OCI-LY7 (cell line): ENCODE measurements at regions of chr5 and their contacts with region 1.

Region 1: GRCh38 chr5:45189481-45189880 is 380.7 kb downstream of the MRPS30 start:
- DNase-seq: no peak
- H3K4me3 ChIP-seq: no peak overlapping the region
- H3K27ac ChIP-seq: no peak overlapping the region
- H3K4me1 ChIP-seq: no peaks in the 10 kb centered on the region
- CTCF ChIP-seq: no peak

Region 2: GRCh38 chr5:43680286-43680685 is 1509.2 kb before region 1 on chr5:
- CTCF ChIA-PET with region 1: no interaction called
- POLR2A ChIA-PET with region 1: no interaction called
- intact Hi-C with region 1: no loop called
- DNase-seq: no peak
- H3K4me3 ChIP-seq: no peak overlapping the region
- H3K27ac ChIP-seq: no peak overlapping the region
- H3K4me1 ChIP-seq: no peaks in the 10 kb centered on the region
- CTCF ChIP-seq: no peak

Region 3: DNA sequence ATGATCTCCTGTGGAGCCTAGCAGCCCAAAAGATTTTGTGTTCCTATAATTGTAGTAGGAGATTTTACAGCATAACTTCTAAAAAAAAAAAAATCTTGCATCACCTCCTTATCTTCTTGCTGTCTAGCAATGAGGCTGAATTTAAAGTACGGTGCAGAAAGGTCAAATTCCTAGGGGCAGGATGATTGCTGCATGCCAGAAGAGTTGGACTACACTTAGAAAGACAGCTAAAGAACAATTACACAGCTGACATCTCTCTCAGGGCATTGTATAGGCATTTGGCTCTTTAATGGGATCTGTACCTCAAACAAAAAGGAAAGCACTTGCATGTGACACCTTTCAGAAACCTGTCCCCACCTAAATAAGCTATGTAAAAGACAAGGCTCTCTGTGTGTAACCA is 63.5 kb after region 1 on chr5:
- CTCF ChIA-PET with region 1: no interaction called
- POLR2A ChIA-PET with region 1: no interaction called
- intact Hi-C with region 1: loop called (anchors 10 kb)
- DNase-seq: no peak
- H3K4me3 ChIP-seq: no peak overlapping the region
- H3K27ac ChIP-seq: no peak overlapping the region
- H3K4me1 ChIP-seq: no peaks in the 10 kb centered on the region
- CTCF ChIP-seq: no peak

Region 4: GRCh38 chr5:45277860-45278259 is 88.4 kb after region 1 on chr5:
- CTCF ChIA-PET with region 1: no interaction called
- POLR2A ChIA-PET with region 1: no interaction called
- intact Hi-C with region 1: no loop called
- DNase-seq: no peak
- H3K4me3 ChIP-seq: no peak overlapping the region
- H3K27ac ChIP-seq: no peak overlapping the region
- H3K4me1 ChIP-seq: no peaks in the 10 kb centered on the region
- CTCF ChIP-seq: no peak

Region 5: DNA sequence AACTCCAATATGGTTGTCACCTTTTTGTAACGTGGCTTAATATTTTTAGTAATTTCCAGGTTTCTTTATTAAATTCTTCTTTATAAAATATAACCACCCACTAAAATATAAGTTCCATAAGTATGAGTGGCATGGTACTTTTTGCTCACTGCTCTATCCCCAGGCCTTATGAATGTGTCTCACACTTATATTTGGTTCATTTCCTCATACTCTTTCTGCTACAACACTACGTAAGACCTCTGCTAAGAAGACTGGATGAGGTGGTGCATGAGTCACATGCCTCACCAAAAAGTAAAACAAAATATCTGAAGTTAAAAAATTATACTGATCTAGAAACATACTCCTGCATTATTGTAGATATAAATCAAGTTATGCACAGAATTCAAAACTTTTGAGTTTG is 105.8 kb after region 1 on chr5:
- CTCF ChIA-PET with region 1: no interaction called
- POLR2A ChIA-PET with region 1: no interaction called
- intact Hi-C with region 1: no loop called
- DNase-seq: no peak
- H3K4me3 ChIP-seq: no peak overlapping the region
- H3K27ac ChIP-seq: no peak overlapping the region
- H3K4me1 ChIP-seq: no peaks in the 10 kb centered on the region
- CTCF ChIP-seq: no peak